HEK293 (cell line): ENCODE measurements at regions of chr21 and their contacts with region 1.

Region 1: GRCh38 chr21:25360593-25360992 is 246.7 kb downstream of the MRPL39 start:
- H3K4me3 ChIP-seq: no peak overlapping the region
- H3K27ac ChIP-seq: no peak overlapping the region
- H3K4me1 ChIP-seq: no peaks in the 10 kb centered on the region
- CTCF ChIP-seq: no peak

Region 2: DNA sequence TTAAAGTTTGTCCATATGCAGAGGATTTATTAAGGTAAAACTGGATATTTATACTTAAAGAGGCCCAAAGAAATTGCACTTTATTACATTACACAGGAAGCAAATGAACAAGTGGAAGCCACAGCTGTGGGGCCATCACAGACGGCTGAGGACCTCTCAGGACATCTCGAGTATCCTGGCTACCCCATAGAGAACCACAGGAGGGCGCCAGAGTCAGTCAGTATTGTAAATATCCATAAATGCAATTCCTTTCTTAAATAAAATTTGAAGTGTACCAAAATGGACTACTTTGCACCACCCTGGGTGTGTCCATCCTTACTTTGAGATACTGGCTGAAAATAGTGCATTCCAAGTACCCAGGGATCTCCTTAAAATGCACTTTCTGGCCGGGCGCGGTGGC is 10.5 kb before region 1 on chr21:
- CTCF ChIA-PET with region 1: interaction called, 11 read pairs
- POLR2A ChIA-PET with region 1: no interaction called
- H3K4me3 ChIP-seq: no peak overlapping the region
- H3K27ac ChIP-seq: no peak overlapping the region
- H3K4me1 ChIP-seq: no peaks in the 10 kb centered on the region
- CTCF ChIP-seq: no peak